Activated CD8-positive, alpha-beta T cell treated with anti-CD3 and anti-CD28 coated beads for 36 hours (primary cell): ENCODE measurements at regions of chr12 and their contacts with region 1.

Region 1: GRCh38 chr12:53675651-53676453 is at the start of gene ATP5MC2:
- DNase-seq: peak; percentile 98
- ATAC-seq: peak; percentile 93
- H3K4me3 Mint-ChIP-seq: peak within 1 kb of the TSS; percentile 95
- H3K27ac Mint-ChIP-seq: peak within 1 kb of the TSS; percentile 96
- H3K4me1 Mint-ChIP-seq: peaks cover 35% of the 10 kb centered on the region
- H3K27me3 Mint-ChIP-seq: peaks cover 19% of the 10 kb centered on the region
- CTCF ChIP-seq: peak; percentile 98
- total RNA-seq, gene ATP5MC2: 365 to 378 TPM

Region 2: GRCh38 chr12:53625946-53626701 is 49.7 kb before region 1 on chr12 and contains the start of gene ATF7:
- CTCF ChIA-PET with region 1: interaction called, 15 read pairs
- POLR2A ChIA-PET with region 1: interaction called, 15 read pairs
- intact Hi-C with region 1: no loop called
- DNase-seq: peak; percentile 98
- ATAC-seq: peak; percentile 95
- H3K4me3 Mint-ChIP-seq: peak within 1 kb of the TSS; percentile 97
- H3K27ac Mint-ChIP-seq: peak within 1 kb of the TSS; percentile 98
- H3K4me1 Mint-ChIP-seq: peaks cover 38% of the 10 kb centered on the region
- H3K27me3 Mint-ChIP-seq: no peaks in the 10 kb centered on the region
- CTCF ChIP-seq: no peak
- total RNA-seq, gene ATF7: 22.0 to 22.6 TPM

Region 3: GRCh38 chr12:53696285-53696654 is 20.4 kb after region 1 on chr12:
- CTCF ChIA-PET with region 1: interaction called, 7 read pairs
- POLR2A ChIA-PET with region 1: interaction called, 10 read pairs
- intact Hi-C with region 1: no loop called
- DNase-seq: no peak
- ATAC-seq: no peak
- H3K4me3 Mint-ChIP-seq: no peak overlapping the region
- H3K27ac Mint-ChIP-seq: no peak overlapping the region
- H3K4me1 Mint-ChIP-seq: peaks cover 27% of the 10 kb centered on the region
- H3K27me3 Mint-ChIP-seq: peaks cover 75% of the 10 kb centered on the region
- CTCF ChIP-seq: no peak

Region 4: DNA sequence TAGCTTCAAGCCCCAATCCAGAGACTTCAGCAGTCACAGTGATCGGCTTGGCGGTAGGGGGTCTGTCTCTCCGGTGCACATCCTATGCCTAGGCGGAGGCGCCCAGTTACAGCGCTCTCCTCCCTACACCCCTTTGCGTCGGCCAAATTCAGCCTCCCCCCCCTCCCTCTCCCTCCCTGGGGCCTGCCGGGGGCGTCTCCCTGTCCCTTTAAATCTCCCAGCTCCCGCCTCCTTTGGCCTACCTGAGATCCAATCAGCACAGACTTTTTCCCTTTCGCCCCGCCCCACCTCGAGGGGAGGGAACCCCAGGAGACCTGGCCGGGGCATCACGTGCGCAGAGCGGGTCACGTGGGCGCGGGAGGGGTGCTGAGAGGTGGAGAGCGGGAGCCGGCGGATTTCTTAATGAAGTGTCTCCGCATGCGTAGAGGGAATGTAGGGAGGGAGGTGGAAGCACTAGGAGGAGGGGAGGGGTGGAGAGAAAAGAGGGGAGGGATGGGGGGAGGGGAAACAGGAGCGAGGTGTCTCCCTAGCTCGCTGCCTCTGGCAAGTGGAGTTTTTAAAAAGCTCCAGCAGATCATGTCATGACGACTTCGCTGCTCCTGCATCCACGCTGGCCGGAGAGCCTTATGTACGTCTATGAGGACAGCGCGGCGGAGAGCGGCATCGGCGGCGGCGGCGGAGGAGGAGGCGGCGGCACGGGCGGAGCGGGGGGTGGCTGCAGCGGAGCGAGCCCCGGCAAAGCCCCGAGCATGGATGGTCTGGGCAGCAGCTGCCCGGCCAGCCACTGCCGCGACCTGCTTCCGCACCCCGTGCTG is 262.7 kb after region 1 on chr12 and contains the start of gene HOXC13:
- CTCF ChIA-PET with region 1: no interaction called
- POLR2A ChIA-PET with region 1: no interaction called
- intact Hi-C with region 1: no loop called
- DNase-seq: peak; percentile 54
- ATAC-seq: peak; percentile 56
- H3K4me3 Mint-ChIP-seq: no peak within 1 kb of the TSS
- H3K27ac Mint-ChIP-seq: no peak within 1 kb of the TSS
- H3K4me1 Mint-ChIP-seq: peaks cover 4% of the 10 kb centered on the region
- H3K27me3 Mint-ChIP-seq: peaks cover 78% of the 10 kb centered on the region
- CTCF ChIP-seq: no peak
- total RNA-seq, gene HOXC13: not detected